ENCODE measurements at regions of chr6 and their contacts with region 1.

Region 1: DNA sequence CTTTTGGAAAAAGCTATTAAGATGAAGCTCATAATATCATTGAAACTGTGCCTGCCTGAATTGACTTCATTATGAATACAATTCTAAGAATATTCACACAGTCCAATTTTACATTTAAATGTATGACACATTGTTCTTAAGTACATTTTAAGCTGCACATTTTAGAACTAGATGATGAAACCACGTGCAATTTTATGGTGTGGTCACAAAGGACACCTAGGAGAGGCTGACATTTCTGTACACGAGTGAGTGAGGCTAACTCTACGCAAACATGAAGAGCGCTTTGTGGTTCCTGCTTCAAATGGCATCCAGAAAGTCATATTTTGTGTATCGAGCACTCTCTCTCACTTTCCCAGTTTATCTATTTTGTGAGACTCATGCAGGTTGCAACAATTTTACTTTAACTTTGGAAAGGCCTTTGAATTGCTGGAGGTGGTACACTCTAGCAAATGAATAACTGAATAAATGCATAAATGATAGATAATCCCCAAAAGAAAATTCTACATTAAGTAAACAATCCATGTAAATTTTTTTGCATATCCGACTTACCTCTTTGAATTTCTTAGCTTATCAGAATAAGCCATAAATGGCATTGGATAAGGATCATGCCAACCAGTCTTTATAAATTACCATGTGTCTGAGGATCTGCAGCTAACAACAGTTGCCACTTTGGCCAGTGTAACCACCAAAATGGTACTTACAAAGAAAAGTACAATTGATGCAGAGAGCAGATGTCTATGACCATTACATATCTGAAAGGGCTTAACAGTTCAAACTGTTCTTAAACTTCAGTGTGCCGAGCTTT is 97.3 kb downstream of the NRSN1 start:
- DNase-seq: no peak
- H3K4me3 ChIP-seq: no peak overlapping the region
- H3K27ac ChIP-seq: no peak overlapping the region
- H3K4me1 ChIP-seq: no peaks in the 10 kb centered on the region
- H3K27me3 ChIP-seq: no peaks in the 10 kb centered on the region
- CTCF ChIP-seq: no peak
- EP300 ChIP-seq: no peak
- POLR2A ChIP-seq: no peak

Region 2: DNA sequence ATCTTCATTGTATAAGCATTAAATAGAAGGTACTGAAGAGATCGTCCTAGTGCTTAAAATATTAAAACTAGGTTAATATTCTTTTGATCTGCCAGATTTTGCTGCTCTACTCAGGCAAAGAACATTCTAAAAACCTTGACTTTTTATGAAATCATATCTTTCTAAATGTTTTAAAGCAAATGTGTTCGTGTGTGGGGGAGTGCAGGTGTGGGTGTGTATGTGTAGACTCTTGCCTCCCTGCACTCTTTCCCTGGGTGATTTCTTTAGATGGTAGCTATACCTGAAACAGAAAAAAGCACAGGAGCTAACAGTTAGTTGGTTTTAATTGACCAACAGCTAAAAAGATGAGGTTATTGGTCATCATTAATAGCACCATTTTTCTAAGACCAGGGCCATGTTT is 91.6 kb before region 1 on chr6:
- intact Hi-C with region 1: no loop called
- DNase-seq: no peak
- H3K4me3 ChIP-seq: no peak overlapping the region
- H3K27ac ChIP-seq: no peak overlapping the region
- H3K4me1 ChIP-seq: no peaks in the 10 kb centered on the region
- H3K27me3 ChIP-seq: no peaks in the 10 kb centered on the region
- CTCF ChIP-seq: no peak
- EP300 ChIP-seq: no peak
- POLR2A ChIP-seq: no peak

Region 3: DNA sequence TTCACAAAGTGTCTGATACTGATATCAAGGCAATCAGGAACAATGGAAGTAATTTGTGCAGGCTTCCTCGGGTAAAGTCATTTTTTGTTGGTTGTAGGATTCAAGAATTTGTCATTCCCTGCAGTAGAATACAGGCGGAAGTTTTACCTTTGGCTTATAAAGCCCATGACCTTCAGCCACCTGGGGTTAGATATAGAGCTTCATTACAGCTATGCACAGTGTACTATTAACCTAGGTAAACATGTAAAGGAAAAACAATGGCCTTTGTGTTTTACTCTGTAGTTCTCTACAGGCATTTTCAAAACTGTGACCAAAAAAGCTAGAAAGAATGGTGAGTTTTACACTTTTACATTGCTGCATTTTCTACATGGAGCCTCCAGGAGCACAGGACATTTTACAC is 17.6 kb after region 1 on chr6:
- intact Hi-C with region 1: loop called in 1 of 4 experiments (anchors 1 kb)
- DNase-seq: no peak
- H3K4me3 ChIP-seq: no peak overlapping the region
- H3K27ac ChIP-seq: no peak overlapping the region
- H3K4me1 ChIP-seq: no peaks in the 10 kb centered on the region
- H3K27me3 ChIP-seq: no peaks in the 10 kb centered on the region
- CTCF ChIP-seq: no peak
- EP300 ChIP-seq: no peak
- POLR2A ChIP-seq: no peak

Region 4: GRCh38 chr6:24646782-24647181 is 423.5 kb after region 1 on chr6:
- intact Hi-C with region 1: no loop called
- DNase-seq: no peak
- H3K4me3 ChIP-seq: no peak overlapping the region
- H3K27ac ChIP-seq: no peak overlapping the region
- H3K4me1 ChIP-seq: peaks cover 3% of the 10 kb centered on the region
- H3K27me3 ChIP-seq: no peaks in the 10 kb centered on the region
- CTCF ChIP-seq: no peak
- EP300 ChIP-seq: no peak
- POLR2A ChIP-seq: no peak

Measured in ovary (tissue), 10 donors.